Naive thymus-derived CD4-positive, alpha-beta T cell (primary cell): ENCODE measurements at regions of chr4 and their contacts with region 1.

Region 1: DNA sequence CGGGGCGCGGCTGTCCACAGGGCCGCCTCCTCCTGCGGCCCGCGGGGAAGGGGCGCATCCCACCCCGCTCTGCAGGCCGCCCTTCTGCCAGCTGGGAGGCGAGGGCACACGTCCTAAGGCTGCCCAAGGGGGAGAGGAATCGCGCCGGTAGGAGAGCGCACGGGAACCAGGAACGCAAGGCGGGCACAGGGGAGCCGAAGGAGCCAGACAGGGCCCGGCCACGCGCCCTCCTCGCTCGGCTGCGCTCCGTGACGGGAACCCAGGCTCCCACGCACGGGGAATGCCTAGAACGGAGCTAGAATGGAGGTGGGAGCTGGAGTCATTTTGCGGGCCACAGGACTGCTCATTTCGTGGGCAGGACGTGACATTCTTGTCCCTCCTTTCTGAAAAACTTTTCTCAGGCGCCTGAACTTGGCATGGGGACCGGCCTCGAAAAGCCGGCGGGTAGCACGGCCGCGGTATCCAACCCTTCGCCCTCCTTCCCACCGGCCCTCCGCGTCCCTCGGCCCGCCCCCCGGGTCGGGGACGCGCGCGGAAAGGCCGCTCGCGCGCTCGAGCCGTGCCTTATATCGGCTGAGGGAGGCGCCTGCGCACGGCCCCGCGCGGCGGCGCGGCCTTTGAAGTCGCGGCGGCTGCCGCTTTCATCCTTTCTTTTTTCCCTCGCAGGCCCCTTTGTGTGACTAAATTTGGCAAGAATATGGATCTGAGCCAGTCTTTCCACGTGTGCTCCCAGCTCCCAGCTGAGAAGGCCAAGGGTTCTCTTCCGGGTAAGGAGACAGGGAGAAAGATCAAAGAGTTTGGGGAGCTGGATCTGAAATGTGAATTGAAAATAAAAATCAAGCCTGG is 4.2 kb upstream of the LEF1 start:
- DNase-seq: peak; percentile 68 to 81 (median 78)
- ATAC-seq: peak; percentile 67
- H3K4me3 ChIP-seq: peak overlapping the region; percentile 86
- H3K4me3 Mint-ChIP-seq: peak overlapping the region; percentile 89 to 100 (median 94)
- H3K27ac ChIP-seq: peak overlapping the region; percentile 93
- H3K27ac Mint-ChIP-seq: peak overlapping the region; percentile 90 to 97 (median 95)
- H3K4me1 ChIP-seq: peaks cover 3 to 33% of the 10 kb centered on the region in 2 donors
- H3K4me1 Mint-ChIP-seq: peaks cover 27 to 71% (median 61%) of the 10 kb centered on the region in 7 donors
- H3K27me3 ChIP-seq: no peaks in the 10 kb centered on the region
- H3K27me3 Mint-ChIP-seq: peaks cover 0 to 30% (median 0%) of the 10 kb centered on the region in 5 donors

Region 2: GRCh38 chr4:107719922-107720722 is 452.9 kb before region 1 on chr4 and contains the start of gene PAPSS1:
- CTCF ChIA-PET with region 1: no interaction called
- POLR2A ChIA-PET with region 1: no interaction called
- intact Hi-C with region 1: loop called (anchors 2 to 5 kb)
- DNase-seq: peak; percentile 91 to 96 (median 94)
- ATAC-seq: peak; percentile 94
- H3K4me3 ChIP-seq: peak within 1 kb of the TSS; percentile 88
- H3K4me3 Mint-ChIP-seq: peak within 1 kb of the TSS; percentile 92 to 99 (median 96)
- H3K27ac ChIP-seq: peak within 1 kb of the TSS; percentile 78
- H3K27ac Mint-ChIP-seq: peak within 1 kb of the TSS; percentile 93 to 99 (median 95)
- H3K4me1 ChIP-seq: peaks cover 4 to 12% of the 10 kb centered on the region in 2 donors
- H3K4me1 Mint-ChIP-seq: peaks cover 19 to 38% (median 32%) of the 10 kb centered on the region in 7 donors
- H3K27me3 ChIP-seq: no peaks in the 10 kb centered on the region
- H3K27me3 Mint-ChIP-seq: no peaks in the 10 kb centered on the region
- total RNA-seq, gene PAPSS1: 7.8 to 30.0 (median 16.1) TPM

Region 3: GRCh38 chr4:107863850-107864371 is 309.1 kb before region 1 on chr4:
- CTCF ChIA-PET with region 1: no interaction called
- POLR2A ChIA-PET with region 1: no interaction called
- intact Hi-C with region 1: no loop called
- DNase-seq: no peak
- ATAC-seq: no peak
- H3K4me3 ChIP-seq: no peak overlapping the region
- H3K4me3 Mint-ChIP-seq: no peak overlapping the region
- H3K27ac ChIP-seq: no peak overlapping the region
- H3K27ac Mint-ChIP-seq: no peak overlapping the region
- H3K4me1 ChIP-seq: no peaks in the 10 kb centered on the region
- H3K4me1 Mint-ChIP-seq: peaks cover 0 to 9% (median 0%) of the 10 kb centered on the region in 7 donors
- H3K27me3 ChIP-seq: no peaks in the 10 kb centered on the region
- H3K27me3 Mint-ChIP-seq: peaks cover 4 to 42% (median 9%) of the 10 kb centered on the region in 5 donors

Region 4: GRCh38 chr4:108045694-108046038 is 127.3 kb before region 1 on chr4:
- CTCF ChIA-PET with region 1: interaction called, 3 read pairs
- POLR2A ChIA-PET with region 1: interaction called, 7 read pairs
- intact Hi-C with region 1: loop called in 1 of 2 experiments (anchors 1 kb)
- DNase-seq: peak in 4 of 9 donors; percentile 47 to 67 (median 60)
- ATAC-seq: peak; percentile 54
- H3K4me3 ChIP-seq: no peak overlapping the region
- H3K4me3 Mint-ChIP-seq: peak overlapping the region in 6 of 10 donors; percentile 15 to 69 (median 53)
- H3K27ac ChIP-seq: peak overlapping the region; percentile 71
- H3K27ac Mint-ChIP-seq: peak overlapping the region; percentile 46 to 99 (median 89)
- H3K4me1 ChIP-seq: peaks cover 10 to 57% of the 10 kb centered on the region in 2 donors
- H3K4me1 Mint-ChIP-seq: peaks cover 31 to 80% (median 73%) of the 10 kb centered on the region in 7 donors
- H3K27me3 ChIP-seq: no peaks in the 10 kb centered on the region
- H3K27me3 Mint-ChIP-seq: no peaks in the 10 kb centered on the region

Region 5: GRCh38 chr4:108135549-108136209 is 37.3 kb before region 1 on chr4:
- CTCF ChIA-PET with region 1: no interaction called
- POLR2A ChIA-PET with region 1: interaction called, 31 read pairs
- intact Hi-C with region 1: loop called in 1 of 2 experiments (anchors 5 kb)
- DNase-seq: no peak
- ATAC-seq: peak; percentile 2
- H3K4me3 ChIP-seq: peak overlapping the region; percentile 27
- H3K4me3 Mint-ChIP-seq: peak overlapping the region; percentile 70 to 92 (median 82)
- H3K27ac ChIP-seq: peak overlapping the region; percentile 69
- H3K27ac Mint-ChIP-seq: peak overlapping the region; percentile 79 to 98 (median 90)
- H3K4me1 ChIP-seq: peaks cover 13 to 94% of the 10 kb centered on the region in 2 donors
- H3K4me1 Mint-ChIP-seq: peaks cover 57 to 99% (median 90%) of the 10 kb centered on the region in 7 donors
- H3K27me3 ChIP-seq: no peaks in the 10 kb centered on the region
- H3K27me3 Mint-ChIP-seq: no peaks in the 10 kb centered on the region

Region 6: GRCh38 chr4:108160741-108161352 is 12.1 kb before region 1 on chr4:
- CTCF ChIA-PET with region 1: interaction called, 10 read pairs
- POLR2A ChIA-PET with region 1: interaction called, 191 read pairs
- intact Hi-C with region 1: loop called in 1 of 2 experiments (anchors 1 kb)
- DNase-seq: peak in 6 of 9 donors; percentile 47 to 63 (median 51)
- ATAC-seq: peak; percentile 62
- H3K4me3 ChIP-seq: peak overlapping the region; percentile 77
- H3K4me3 Mint-ChIP-seq: peak overlapping the region; percentile 83 to 100 (median 97)
- H3K27ac ChIP-seq: peak overlapping the region; percentile 87
- H3K27ac Mint-ChIP-seq: peak overlapping the region; percentile 63 to 97 (median 92)
- H3K4me1 ChIP-seq: peaks cover 31 to 41% of the 10 kb centered on the region in 2 donors
- H3K4me1 Mint-ChIP-seq: peaks cover 12 to 70% (median 44%) of the 10 kb centered on the region in 7 donors
- H3K27me3 ChIP-seq: no peaks in the 10 kb centered on the region
- H3K27me3 Mint-ChIP-seq: peaks cover 0 to 4% (median 0%) of the 10 kb centered on the region in 5 donors

Region 7: DNA sequence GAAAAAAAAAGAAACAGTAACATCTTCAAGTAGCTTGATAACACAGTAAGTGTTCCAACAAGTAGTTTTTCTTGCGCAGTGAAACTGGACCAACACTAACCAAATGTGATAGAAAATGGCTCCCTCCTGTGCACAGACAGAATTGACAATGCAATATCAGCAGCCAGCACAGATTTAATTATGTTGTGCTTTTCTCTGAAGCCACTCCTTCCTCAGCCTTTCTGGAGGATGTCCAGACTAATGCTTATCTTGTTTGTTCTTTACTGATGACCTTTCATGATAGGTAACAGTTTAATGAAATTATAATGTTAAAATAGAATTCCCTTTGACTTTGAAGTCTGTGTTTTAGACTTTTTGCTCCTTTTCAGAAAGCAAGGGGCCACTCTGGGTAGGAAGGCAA is 300.2 kb after region 1 on chr4:
- CTCF ChIA-PET with region 1: no interaction called
- POLR2A ChIA-PET with region 1: no interaction called
- intact Hi-C with region 1: loop called in 1 of 2 experiments (anchors 1 kb)
- DNase-seq: peak in 4 of 9 donors; percentile 17 to 43 (median 22)
- ATAC-seq: peak; percentile 40
- H3K4me3 ChIP-seq: no peak overlapping the region
- H3K4me3 Mint-ChIP-seq: no peak overlapping the region
- H3K27ac ChIP-seq: no peak overlapping the region
- H3K27ac Mint-ChIP-seq: peak overlapping the region in 2 of 9 donors; percentile 25 to 31
- H3K4me1 ChIP-seq: peaks cover 0 to 7% of the 10 kb centered on the region in 2 donors
- H3K4me1 Mint-ChIP-seq: peaks cover 11 to 65% (median 58%) of the 10 kb centered on the region in 7 donors
- H3K27me3 ChIP-seq: no peaks in the 10 kb centered on the region
- H3K27me3 Mint-ChIP-seq: no peaks in the 10 kb centered on the region

Region 8: GRCh38 chr4:108570993-108571569 is 398.1 kb after region 1 on chr4:
- CTCF ChIA-PET with region 1: interaction called, 4 read pairs
- POLR2A ChIA-PET with region 1: interaction called, 5 read pairs
- intact Hi-C with region 1: loop called (anchors 1 to 2 kb)
- DNase-seq: no peak
- ATAC-seq: no peak
- H3K4me3 ChIP-seq: no peak overlapping the region
- H3K4me3 Mint-ChIP-seq: no peak overlapping the region
- H3K27ac ChIP-seq: no peak overlapping the region
- H3K27ac Mint-ChIP-seq: peak overlapping the region in 5 of 9 donors; percentile 0 to 74 (median 28)
- H3K4me1 ChIP-seq: peaks cover 0 to 11% of the 10 kb centered on the region in 2 donors
- H3K4me1 Mint-ChIP-seq: peaks cover 13 to 44% (median 32%) of the 10 kb centered on the region in 7 donors
- H3K27me3 ChIP-seq: no peaks in the 10 kb centered on the region
- H3K27me3 Mint-ChIP-seq: no peaks in the 10 kb centered on the region